Activated CD4-positive, alpha-beta T cell treated with anti-CD3 and anti-CD28 coated beads for 36 hours (primary cell): ENCODE measurements at regions of chr10 and their contacts with region 1.

Region 1: GRCh38 chr10:61750929-61751471 is 88.3 kb downstream of the CABCOCO1 start:
- DNase-seq: peak; percentile 81
- ATAC-seq: peak; percentile 91
- H3K4me3 Mint-ChIP-seq: no peak overlapping the region
- H3K27ac Mint-ChIP-seq: peak overlapping the region; percentile 51
- H3K4me1 Mint-ChIP-seq: peaks cover 33% of the 10 kb centered on the region
- H3K27me3 Mint-ChIP-seq: no peaks in the 10 kb centered on the region

Region 2: GRCh38 chr10:61786728-61787127 is 35.7 kb after region 1 on chr10:
- CTCF ChIA-PET with region 1: interaction called, 3 read pairs
- POLR2A ChIA-PET with region 1: no interaction called
- intact Hi-C with region 1: loop called in 1 of 2 experiments (anchors 2 kb)
- DNase-seq: peak; percentile 30
- ATAC-seq: peak; percentile 33
- H3K4me3 Mint-ChIP-seq: no peak overlapping the region
- H3K27ac Mint-ChIP-seq: no peak overlapping the region
- H3K4me1 Mint-ChIP-seq: peaks cover 47% of the 10 kb centered on the region
- H3K27me3 Mint-ChIP-seq: no peaks in the 10 kb centered on the region

Region 3: DNA sequence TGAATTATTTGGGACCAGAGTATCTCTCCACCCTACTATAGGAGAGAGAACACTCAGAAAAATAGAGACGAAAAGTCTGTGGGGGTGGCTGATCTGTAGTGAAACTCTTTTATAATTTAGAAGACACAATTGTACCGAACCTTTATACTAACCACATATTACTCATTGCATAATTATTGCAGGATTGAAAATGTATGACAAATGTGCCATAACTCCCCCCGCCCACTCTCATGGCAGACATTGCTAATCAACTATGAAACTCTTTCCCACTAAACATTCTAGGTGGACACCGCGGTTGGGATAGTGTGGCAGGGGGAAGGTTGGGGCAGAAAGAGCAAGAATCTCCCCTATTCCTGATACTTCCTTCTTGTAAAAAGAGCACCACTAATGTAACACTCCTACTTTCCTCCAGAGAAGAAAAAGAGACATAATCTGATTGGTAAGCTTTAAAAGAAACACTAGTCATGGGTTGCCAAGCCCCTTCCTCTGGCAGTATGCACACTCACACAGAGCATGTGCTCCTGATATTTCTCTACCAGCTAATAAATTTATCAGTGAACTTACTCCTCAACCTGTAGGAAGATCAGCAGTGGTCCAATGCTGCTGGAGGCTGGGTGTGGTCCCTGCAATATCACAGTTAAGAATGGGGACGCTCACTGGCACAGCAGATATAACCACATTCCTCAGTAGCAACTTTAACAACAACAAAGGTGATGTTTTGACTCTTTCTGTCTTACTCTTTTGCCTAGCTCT is 131.8 kb after region 1 on chr10:
- CTCF ChIA-PET with region 1: interaction called, 3 read pairs
- POLR2A ChIA-PET with region 1: no interaction called
- intact Hi-C with region 1: loop called in 1 of 2 experiments (anchors 5 kb)
- DNase-seq: peak; percentile 86
- ATAC-seq: peak; percentile 96
- H3K4me3 Mint-ChIP-seq: no peak overlapping the region
- H3K27ac Mint-ChIP-seq: peak overlapping the region; percentile 87
- H3K4me1 Mint-ChIP-seq: peaks cover 31% of the 10 kb centered on the region
- H3K27me3 Mint-ChIP-seq: no peaks in the 10 kb centered on the region

Region 4: DNA sequence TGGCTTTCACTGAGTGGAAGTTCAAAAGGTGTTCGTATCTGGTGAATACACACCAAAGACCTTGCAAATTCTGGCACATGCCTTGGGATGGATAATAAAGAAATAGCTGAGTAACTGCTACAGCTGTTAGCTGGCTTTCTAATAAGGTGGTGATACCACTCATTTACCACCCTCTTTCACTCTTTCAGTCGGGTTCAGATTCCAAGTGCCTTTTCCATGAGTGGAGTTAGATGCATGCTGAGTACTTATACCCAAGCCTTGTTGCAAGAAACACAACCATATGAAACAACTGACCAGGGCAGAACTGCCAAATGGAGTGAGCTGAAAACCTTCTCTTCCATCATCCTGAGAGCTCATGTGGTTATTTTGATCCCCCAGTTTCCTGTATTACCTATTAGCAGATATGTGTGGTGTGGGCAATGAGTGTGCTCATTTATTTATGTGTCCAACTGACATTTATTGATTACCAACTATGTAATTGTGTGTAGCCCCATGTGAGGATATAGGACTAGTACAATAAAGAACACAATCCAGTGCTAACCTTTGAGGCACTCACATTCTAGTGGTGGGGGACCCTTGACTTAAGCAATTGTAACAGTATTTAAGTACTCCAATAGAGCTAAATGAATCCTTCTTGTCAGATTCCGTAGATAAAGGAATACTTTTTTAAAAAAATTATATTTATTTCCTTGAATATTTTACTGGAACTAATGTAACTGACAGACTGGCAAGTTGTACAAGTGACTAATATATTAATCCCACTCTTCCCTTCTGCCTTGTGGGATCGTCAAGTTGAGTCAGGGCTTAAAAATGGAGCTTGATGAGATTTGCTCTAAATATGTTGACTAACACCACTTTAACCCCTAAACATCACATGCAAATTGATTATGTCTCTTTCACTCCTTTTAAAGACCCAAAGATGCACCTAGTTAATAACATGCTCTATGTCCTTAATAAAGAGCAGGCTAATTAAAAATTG is 275.2 kb after region 1 on chr10:
- CTCF ChIA-PET with region 1: no interaction called
- POLR2A ChIA-PET with region 1: no interaction called
- intact Hi-C with region 1: loop called in 1 of 2 experiments (anchors 10 kb)
- DNase-seq: no peak
- ATAC-seq: no peak
- H3K4me3 Mint-ChIP-seq: no peak overlapping the region
- H3K27ac Mint-ChIP-seq: peak overlapping the region; percentile 66
- H3K4me1 Mint-ChIP-seq: peaks cover 92% of the 10 kb centered on the region
- H3K27me3 Mint-ChIP-seq: no peaks in the 10 kb centered on the region

Region 5: DNA sequence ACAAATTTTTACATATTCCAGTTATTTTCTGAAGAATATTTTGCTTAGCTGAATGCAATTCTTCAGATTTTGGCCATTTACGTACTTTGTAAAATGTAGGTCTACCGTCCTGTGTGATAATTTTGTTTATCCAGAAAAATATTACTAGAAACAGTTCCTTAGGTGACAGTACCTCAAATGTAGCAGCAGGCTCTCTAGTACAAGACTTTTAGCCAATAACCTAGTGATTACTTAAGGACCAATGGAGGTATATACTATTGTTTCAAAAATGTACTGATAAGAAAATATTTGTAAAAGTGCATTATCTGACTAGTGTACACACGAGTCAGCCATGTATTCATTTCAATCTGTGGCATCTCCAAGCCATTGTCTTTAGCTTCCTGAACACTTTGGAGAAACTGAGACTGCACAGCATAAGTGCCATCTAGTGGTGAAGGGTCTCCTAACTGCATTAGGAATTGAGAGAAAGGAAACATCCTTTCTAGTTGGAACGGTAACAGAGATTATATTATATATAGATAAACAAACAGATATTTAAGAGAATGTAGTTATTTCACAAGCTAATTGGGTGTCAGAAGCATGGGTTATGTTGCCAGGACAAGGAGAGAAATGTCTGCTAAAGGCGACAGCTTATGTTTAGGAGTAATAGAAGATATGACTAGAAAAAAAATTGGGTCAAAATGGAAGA is 493.9 kb after region 1 on chr10:
- CTCF ChIA-PET with region 1: interaction called, 6 read pairs
- POLR2A ChIA-PET with region 1: no interaction called
- intact Hi-C with region 1: loop called (anchors 2 to 5 kb)
- DNase-seq: peak; percentile 65
- ATAC-seq: peak; percentile 84
- H3K4me3 Mint-ChIP-seq: peak overlapping the region; percentile 36
- H3K27ac Mint-ChIP-seq: peak overlapping the region; percentile 87
- H3K4me1 Mint-ChIP-seq: peaks cover 35% of the 10 kb centered on the region
- H3K27me3 Mint-ChIP-seq: no peaks in the 10 kb centered on the region

Region 6: DNA sequence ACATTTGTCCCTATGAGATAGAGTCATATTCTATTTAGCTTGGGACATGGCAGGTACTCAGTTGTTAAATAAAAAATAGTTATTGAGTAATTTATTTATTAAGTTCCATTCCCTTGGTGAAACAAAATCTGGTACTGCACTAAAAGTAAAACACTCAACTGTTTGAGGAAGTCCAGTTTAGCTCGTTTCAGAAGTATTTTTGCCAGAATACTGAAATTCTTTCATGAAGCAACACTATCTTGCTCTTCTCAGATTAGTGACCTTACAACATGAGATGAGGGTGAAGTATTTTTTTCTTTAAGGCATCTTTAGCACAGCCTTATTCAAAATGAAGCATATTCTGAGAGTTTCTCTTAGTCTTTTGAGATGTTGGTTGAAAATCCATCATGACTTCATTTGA is 729.2 kb after region 1 on chr10:
- CTCF ChIA-PET with region 1: no interaction called
- POLR2A ChIA-PET with region 1: no interaction called
- intact Hi-C with region 1: no loop called
- DNase-seq: no peak
- ATAC-seq: no peak
- H3K4me3 Mint-ChIP-seq: no peak overlapping the region
- H3K27ac Mint-ChIP-seq: no peak overlapping the region
- H3K4me1 Mint-ChIP-seq: no peaks in the 10 kb centered on the region
- H3K27me3 Mint-ChIP-seq: peaks cover 5% of the 10 kb centered on the region